HEK293T (cell line): ENCODE measurements at regions of chr14 and their contacts with region 1.

Region 1: DNA sequence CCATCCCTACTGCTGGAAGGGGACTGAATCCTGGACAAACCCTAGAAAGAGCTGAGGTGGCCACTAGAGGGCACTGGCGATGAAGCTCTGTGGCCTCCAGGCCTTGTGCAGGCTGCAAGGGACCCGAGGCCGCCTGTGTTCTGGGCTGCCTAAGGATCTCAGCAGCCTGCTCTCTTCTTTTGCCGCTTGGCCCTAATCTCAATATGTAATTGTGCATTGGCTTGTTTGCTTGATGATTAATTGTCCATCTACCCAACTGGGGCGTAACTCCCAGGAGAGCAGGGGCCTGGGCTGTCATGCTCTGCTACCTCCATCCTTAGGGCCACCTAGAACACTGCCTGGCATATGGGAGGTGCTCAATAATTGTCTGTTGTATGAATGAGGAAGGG is 73.8 kb downstream of the SYNE3 start:
- DNase-seq: peak; percentile 79

Region 2: GRCh38 chr14:95527387-95528002 is 84.9 kb after region 1 on chr14:
- CTCF ChIA-PET with region 1: interaction called, 18 read pairs
- POLR2A ChIA-PET with region 1: no interaction called
- DNase-seq: no peak

Region 3: DNA sequence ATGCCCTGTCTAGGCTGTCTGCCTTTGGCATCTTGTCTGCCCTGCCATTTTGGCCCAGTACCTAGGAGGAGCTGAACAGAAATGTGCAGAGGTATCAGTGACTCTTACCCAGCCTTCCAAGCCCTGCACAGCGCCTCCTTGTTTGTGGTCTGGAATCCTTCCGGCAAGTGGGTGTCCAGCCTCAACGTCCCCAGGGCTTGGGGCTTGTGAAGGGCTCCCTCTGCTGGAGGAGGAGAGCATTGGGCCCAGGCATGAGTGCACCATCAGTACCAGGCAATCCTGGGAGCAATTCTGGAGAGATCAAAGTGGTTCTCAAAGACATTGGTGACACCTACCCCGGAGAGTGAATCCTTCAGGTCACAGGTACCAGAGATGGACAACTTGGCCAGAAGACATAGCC is 241.2 kb after region 1 on chr14:
- CTCF ChIA-PET with region 1: no interaction called
- POLR2A ChIA-PET with region 1: no interaction called
- DNase-seq: peak; percentile 73